CD4-positive, alpha-beta T cell (primary cell): ENCODE measurements at regions of chr12 and their contacts with region 1.

Region 1: DNA sequence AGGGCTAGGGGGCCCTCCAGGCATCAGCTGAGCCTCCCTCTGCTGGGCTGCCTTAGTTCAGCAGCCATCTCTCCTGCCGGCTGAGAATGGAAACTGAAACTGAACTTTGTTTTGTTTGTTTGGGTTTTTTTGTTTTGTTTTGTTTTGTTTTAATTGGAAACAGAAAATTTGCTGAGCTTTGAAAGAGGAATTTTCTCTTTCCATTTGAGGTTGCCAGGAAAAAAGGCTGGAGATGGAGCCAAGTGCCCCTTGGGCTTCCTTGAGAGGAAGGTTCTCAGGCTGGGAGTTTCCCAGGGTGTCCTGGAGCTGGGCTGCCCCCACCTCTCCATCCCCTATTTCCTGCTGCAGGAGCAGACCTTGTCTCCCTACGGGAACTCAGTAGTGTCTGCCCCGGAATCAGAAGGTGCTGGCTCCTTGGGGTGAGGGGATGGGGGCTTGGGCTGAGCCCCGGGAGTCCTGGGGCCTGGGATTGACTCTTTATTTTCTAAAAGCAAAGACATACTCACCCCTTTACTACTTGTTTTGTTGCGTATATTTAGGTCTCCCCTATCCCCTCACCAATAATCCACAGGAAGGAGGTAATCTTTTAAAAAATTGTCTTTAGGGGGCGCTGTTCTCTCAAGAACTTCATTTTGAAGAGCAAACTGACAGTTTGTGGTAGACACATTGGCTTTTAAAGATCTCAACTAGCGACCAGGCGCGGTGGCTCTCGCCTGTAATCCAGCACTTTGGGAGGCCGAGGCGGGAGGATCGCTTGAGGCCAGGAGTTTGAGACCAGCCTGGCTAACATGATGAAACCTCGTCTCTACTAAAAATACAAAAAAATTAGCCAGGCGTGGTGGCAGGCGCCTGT is 21.3 kb upstream of the OASL start:
- DNase-seq: peak; percentile 44 to 85 (median 57)
- ATAC-seq: peak; percentile 94
- H3K4me3 ChIP-seq: peak overlapping the region; percentile 59
- H3K4me3 Mint-ChIP-seq: peak overlapping the region; percentile 84
- H3K27ac ChIP-seq: peak overlapping the region; percentile 63 to 79
- H3K27ac Mint-ChIP-seq: peak overlapping the region; percentile 88
- H3K4me1 ChIP-seq: peaks cover 15% of the 10 kb centered on the region
- H3K4me1 Mint-ChIP-seq: peaks cover 15% of the 10 kb centered on the region
- H3K27me3 ChIP-seq: no peaks in the 10 kb centered on the region
- H3K27me3 Mint-ChIP-seq: no peaks in the 10 kb centered on the region
- CTCF ChIP-seq: peak; percentile 70

Region 2: GRCh38 chr12:120775862-120776552 is 284.4 kb before region 1 on chr12:
- CTCF ChIA-PET with region 1: no interaction called
- POLR2A ChIA-PET with region 1: no interaction called
- intact Hi-C with region 1: no loop called
- DNase-seq: no peak
- ATAC-seq: no peak
- H3K4me3 ChIP-seq: no peak overlapping the region
- H3K4me3 Mint-ChIP-seq: no peak overlapping the region
- H3K27ac ChIP-seq: no peak overlapping the region
- H3K27ac Mint-ChIP-seq: no peak overlapping the region
- H3K4me1 ChIP-seq: peaks cover 9% of the 10 kb centered on the region
- H3K4me1 Mint-ChIP-seq: peaks cover 21% of the 10 kb centered on the region
- H3K27me3 ChIP-seq: no peaks in the 10 kb centered on the region
- H3K27me3 Mint-ChIP-seq: no peaks in the 10 kb centered on the region
- CTCF ChIP-seq: no peak

Region 3: DNA sequence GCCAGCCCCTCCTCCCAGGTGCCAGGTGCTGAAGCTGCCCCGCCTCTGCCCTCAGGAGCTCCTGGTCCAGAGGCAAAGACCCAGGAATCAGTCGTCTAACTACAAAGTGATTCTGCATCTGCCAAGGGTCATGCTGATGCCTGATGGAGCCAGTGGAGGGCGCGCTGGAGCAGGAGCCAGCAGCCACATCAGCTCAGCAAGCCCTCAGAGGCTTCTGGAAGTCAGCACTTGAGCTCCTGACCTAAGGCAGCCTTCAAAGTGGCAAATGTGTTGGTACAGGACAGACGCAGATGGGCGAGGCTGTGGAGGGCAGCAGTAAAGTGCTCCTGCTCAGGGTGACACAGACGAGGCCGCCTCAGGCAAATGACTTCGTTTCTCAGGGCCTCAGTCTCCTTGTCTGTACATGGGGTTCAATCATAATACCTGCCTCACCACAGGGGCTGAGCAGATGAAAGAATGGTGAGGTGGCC is 55.0 kb before region 1 on chr12:
- CTCF ChIA-PET with region 1: interaction called, 12 read pairs
- POLR2A ChIA-PET with region 1: no interaction called
- intact Hi-C with region 1: no loop called
- DNase-seq: peak in 12 of 14 experiments; percentile 12 to 64 (median 32)
- ATAC-seq: peak; percentile 66
- H3K4me3 ChIP-seq: no peak overlapping the region
- H3K4me3 Mint-ChIP-seq: no peak overlapping the region
- H3K27ac ChIP-seq: no peak overlapping the region
- H3K27ac Mint-ChIP-seq: no peak overlapping the region
- H3K4me1 ChIP-seq: no peaks in the 10 kb centered on the region
- H3K4me1 Mint-ChIP-seq: no peaks in the 10 kb centered on the region
- H3K27me3 ChIP-seq: no peaks in the 10 kb centered on the region
- H3K27me3 Mint-ChIP-seq: no peaks in the 10 kb centered on the region
- CTCF ChIP-seq: peak; percentile 27

Region 4: GRCh38 chr12:121033625-121034349 is 26.6 kb before region 1 on chr12:
- CTCF ChIA-PET with region 1: interaction called, 15 read pairs
- POLR2A ChIA-PET with region 1: interaction called, 9 read pairs
- intact Hi-C with region 1: loop called in 1 of 2 experiments (anchors 2 kb)
- DNase-seq: peak in 13 of 14 experiments; percentile 31 to 88 (median 55)
- ATAC-seq: peak; percentile 75
- H3K4me3 ChIP-seq: peak overlapping the region; percentile 17
- H3K4me3 Mint-ChIP-seq: peak overlapping the region; percentile 75
- H3K27ac ChIP-seq: peak overlapping the region; percentile 42 to 73
- H3K27ac Mint-ChIP-seq: peak overlapping the region; percentile 89
- H3K4me1 ChIP-seq: peaks cover 63% of the 10 kb centered on the region
- H3K4me1 Mint-ChIP-seq: peaks cover 46% of the 10 kb centered on the region
- H3K27me3 ChIP-seq: no peaks in the 10 kb centered on the region
- H3K27me3 Mint-ChIP-seq: no peaks in the 10 kb centered on the region
- CTCF ChIP-seq: no peak

Region 5: GRCh38 chr12:121038861-121039666 is 21.3 kb before region 1 on chr12 and contains the start of gene OASL:
- CTCF ChIA-PET with region 1: interaction called, 15 read pairs
- POLR2A ChIA-PET with region 1: interaction called, 9 read pairs
- intact Hi-C with region 1: loop called in 1 of 2 experiments (anchors 2 kb)
- DNase-seq: peak; percentile 38 to 88 (median 61)
- ATAC-seq: peak; percentile 71
- H3K4me3 ChIP-seq: peak within 1 kb of the TSS; percentile 87
- H3K4me3 Mint-ChIP-seq: peak within 1 kb of the TSS; percentile 96
- H3K27ac ChIP-seq: peak within 1 kb of the TSS; percentile 37 to 56
- H3K27ac Mint-ChIP-seq: peak within 1 kb of the TSS; percentile 94
- H3K4me1 ChIP-seq: peaks cover 58% of the 10 kb centered on the region
- H3K4me1 Mint-ChIP-seq: peaks cover 42% of the 10 kb centered on the region
- H3K27me3 ChIP-seq: no peaks in the 10 kb centered on the region
- H3K27me3 Mint-ChIP-seq: no peaks in the 10 kb centered on the region
- CTCF ChIP-seq: no peak
- total RNA-seq, gene OASL: 33.0 to 34.7 TPM

Region 6: GRCh38 chr12:121095544-121096198 is 35.3 kb after region 1 on chr12:
- CTCF ChIA-PET with region 1: interaction called, 32 read pairs
- POLR2A ChIA-PET with region 1: interaction called, 13 read pairs
- intact Hi-C with region 1: loop called (anchors 1 kb)
- DNase-seq: peak; percentile 60 to 87 (median 72)
- ATAC-seq: peak; percentile 72
- H3K4me3 ChIP-seq: peak overlapping the region; percentile 42
- H3K4me3 Mint-ChIP-seq: peak overlapping the region; percentile 76
- H3K27ac ChIP-seq: no peak overlapping the region
- H3K27ac Mint-ChIP-seq: no peak overlapping the region
- H3K4me1 ChIP-seq: peaks cover 36% of the 10 kb centered on the region
- H3K4me1 Mint-ChIP-seq: peaks cover 54% of the 10 kb centered on the region
- H3K27me3 ChIP-seq: peaks cover 0 to 3% of the 10 kb centered on the region in 2 experiments
- H3K27me3 Mint-ChIP-seq: no peaks in the 10 kb centered on the region
- CTCF ChIP-seq: peak; percentile 89

Region 7: DNA sequence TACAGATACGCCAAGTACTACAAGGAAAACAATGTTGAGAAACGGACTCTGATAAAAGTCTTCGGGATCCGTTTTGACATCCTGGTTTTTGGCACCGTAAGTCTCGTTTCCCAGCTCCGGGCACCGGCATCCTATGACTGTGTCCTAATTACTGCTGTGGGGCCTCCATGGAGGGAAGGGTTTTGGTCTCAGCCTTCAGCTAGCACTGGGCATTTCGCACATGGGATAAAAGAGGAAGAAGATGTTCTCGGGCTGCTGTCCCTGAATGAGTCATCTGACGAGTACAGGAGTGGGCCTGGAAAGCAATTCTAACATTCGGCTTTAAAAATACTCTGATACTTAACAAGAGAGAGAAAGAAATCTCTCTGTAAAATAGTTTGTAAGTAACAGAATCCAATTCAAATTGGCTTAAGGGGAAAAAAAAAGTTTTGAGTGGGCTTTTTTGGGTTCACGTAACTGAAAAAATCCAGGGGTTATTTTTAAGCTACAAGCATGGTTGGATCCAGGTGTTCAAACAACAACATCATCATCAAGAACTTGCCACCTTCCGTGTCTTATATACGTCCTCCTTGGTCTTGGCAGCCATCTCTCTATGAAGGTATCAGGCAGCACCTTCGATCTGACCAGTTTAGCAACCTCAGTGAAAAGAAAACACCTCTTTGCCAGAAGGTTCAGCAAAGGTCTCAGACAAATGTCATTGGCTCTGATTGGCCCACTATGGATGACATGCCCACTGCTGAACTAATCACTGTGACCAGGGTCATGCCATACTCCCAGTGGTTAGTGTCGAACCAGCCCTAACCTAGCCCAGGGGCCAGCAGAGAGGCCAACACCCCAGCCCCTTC is 115.2 kb after region 1 on chr12:
- CTCF ChIA-PET with region 1: no interaction called
- POLR2A ChIA-PET with region 1: no interaction called
- intact Hi-C with region 1: no loop called
- DNase-seq: peak in 3 of 14 experiments; percentile 2 to 52 (median 51)
- ATAC-seq: no peak
- H3K4me3 ChIP-seq: no peak overlapping the region
- H3K4me3 Mint-ChIP-seq: no peak overlapping the region
- H3K27ac ChIP-seq: no peak overlapping the region
- H3K27ac Mint-ChIP-seq: no peak overlapping the region
- H3K4me1 ChIP-seq: peaks cover 2% of the 10 kb centered on the region
- H3K4me1 Mint-ChIP-seq: no peaks in the 10 kb centered on the region
- H3K27me3 ChIP-seq: no peaks in the 10 kb centered on the region
- H3K27me3 Mint-ChIP-seq: no peaks in the 10 kb centered on the region
- CTCF ChIP-seq: no peak

Region 8: DNA sequence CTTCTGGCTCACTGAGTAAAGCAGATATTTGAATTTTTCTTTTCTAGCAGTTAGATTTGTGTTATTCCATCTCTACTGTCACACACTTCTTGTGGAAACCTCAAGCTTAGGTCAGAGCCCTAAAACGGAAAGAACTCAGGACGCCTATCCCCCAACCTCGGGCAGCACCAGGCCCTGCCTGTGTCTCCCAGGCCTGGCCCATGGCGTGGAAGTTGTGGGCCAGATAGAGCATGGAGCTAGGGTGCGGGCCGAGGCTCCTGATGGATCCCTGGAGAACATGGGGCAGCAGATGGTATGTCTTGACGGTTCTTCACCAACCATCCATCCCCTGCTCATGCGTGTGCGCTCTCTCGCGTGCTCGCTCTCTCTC is 170.1 kb after region 1 on chr12:
- CTCF ChIA-PET with region 1: no interaction called
- POLR2A ChIA-PET with region 1: no interaction called
- intact Hi-C with region 1: loop called in 1 of 2 experiments (anchors 5 kb)
- DNase-seq: no peak
- ATAC-seq: no peak
- H3K4me3 ChIP-seq: no peak overlapping the region
- H3K4me3 Mint-ChIP-seq: no peak overlapping the region
- H3K27ac ChIP-seq: no peak overlapping the region
- H3K27ac Mint-ChIP-seq: peak overlapping the region; percentile 55
- H3K4me1 ChIP-seq: peaks cover 37% of the 10 kb centered on the region
- H3K4me1 Mint-ChIP-seq: peaks cover 22% of the 10 kb centered on the region
- H3K27me3 ChIP-seq: no peaks in the 10 kb centered on the region
- H3K27me3 Mint-ChIP-seq: no peaks in the 10 kb centered on the region
- CTCF ChIP-seq: no peak